AG04449 (cell line): ENCODE measurements at regions of chr5 and their contacts with region 1.

Region 1: GRCh38 chr5:141636413-141637122 is at the starts of genes HDAC3 and RELL2:
- DNase-seq: no peak
- H3K4me3 ChIP-seq: peak within 1 kb of the TSS; percentile 99
- CTCF ChIP-seq: no peak

Region 2: DNA sequence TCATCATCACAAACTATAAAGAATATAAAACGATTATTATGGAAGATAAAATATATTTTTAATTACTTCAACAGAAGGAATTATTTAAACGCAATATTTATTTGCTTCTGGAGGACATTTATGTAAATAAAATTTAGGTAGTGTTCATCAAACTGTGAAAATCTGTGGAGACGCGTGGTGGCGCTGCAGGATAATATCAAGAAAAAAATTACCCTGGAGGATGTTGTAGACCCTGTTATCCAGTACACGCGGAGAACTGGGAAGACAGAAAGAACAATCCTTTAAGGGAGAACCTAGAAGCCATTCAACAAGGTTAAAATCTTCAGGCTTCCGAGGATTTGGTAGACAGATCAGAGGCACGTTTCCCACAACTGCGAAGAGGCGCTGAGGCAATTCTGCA is 428.1 kb before region 1 on chr5 and contains the start of gene PCDHB12:
- CTCF ChIA-PET with region 1: no interaction called
- POLR2A ChIA-PET with region 1: no interaction called
- DNase-seq: no peak
- H3K4me3 ChIP-seq: no peak within 1 kb of the TSS; the same call in 1 of the 2 replicates
- CTCF ChIP-seq: no peak

Region 3: GRCh38 chr5:141650851-141651727 is 14.5 kb after region 1 on chr5 and contains the start of gene FCHSD1:
- CTCF ChIA-PET with region 1: interaction called, 33 read pairs
- POLR2A ChIA-PET with region 1: interaction called, 10 read pairs
- DNase-seq: no peak
- H3K4me3 ChIP-seq: peak within 1 kb of the TSS; percentile 81
- CTCF ChIP-seq: no peak